ENCODE measurements at regions of chr17 and their contacts with region 1.

Region 1: DNA sequence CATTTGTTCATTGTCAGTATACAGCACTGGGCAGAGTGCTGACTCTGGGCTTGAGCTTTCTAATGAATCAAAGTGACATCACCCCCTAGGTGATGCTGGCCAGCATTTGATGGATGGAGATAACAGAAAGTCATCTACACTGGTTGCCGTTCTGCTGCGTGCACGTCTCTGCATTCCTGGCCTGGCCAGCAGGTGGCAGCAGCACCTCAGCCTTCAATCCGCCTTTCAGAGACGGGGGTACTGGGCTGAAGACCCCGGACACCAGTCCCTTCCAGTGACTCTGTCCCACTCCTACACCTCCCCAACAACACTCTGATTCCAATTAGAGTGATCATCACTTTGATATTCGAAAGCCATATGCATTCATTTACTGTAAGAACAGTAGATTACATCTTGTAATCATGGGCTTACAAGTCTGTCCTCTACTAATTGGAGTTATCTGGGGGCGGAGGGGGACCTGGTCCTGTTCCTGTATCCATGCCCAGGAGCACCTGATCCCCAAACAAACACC is 6.0 kb downstream of the CPSF4L start:
- DNase-seq: peak; percentile 69
- CTCF ChIP-seq: peak; percentile 96

Region 2: DNA sequence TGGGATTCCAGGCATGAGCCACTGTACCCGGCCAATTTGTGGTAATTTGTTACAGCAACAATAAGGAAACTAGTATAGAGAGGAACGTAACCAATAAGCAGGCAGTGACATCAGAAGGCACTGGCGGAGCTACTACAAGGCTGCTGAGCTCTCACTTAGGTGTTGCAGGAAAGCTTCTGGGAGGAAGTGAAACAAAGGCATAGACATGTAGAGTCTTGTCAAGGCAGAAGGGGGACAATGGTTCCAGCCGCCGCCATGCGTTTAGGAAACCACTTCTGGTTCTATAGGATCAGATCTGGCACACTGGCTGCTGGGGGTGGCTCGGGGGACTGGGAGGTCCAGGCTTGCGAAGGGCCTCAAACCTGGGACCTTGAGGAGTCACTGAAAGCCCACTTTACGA is 15.3 kb after region 1 on chr17:
- CTCF ChIA-PET with region 1: interaction called, 11 read pairs
- POLR2A ChIA-PET with region 1: no interaction called
- DNase-seq: peak; percentile 87
- CTCF ChIP-seq: no peak

Measured in GM10248 (cell line).